CD4-positive, alpha-beta T cell (primary cell): ENCODE measurements at regions of chr19 and their contacts with region 1.

Region 1: DNA sequence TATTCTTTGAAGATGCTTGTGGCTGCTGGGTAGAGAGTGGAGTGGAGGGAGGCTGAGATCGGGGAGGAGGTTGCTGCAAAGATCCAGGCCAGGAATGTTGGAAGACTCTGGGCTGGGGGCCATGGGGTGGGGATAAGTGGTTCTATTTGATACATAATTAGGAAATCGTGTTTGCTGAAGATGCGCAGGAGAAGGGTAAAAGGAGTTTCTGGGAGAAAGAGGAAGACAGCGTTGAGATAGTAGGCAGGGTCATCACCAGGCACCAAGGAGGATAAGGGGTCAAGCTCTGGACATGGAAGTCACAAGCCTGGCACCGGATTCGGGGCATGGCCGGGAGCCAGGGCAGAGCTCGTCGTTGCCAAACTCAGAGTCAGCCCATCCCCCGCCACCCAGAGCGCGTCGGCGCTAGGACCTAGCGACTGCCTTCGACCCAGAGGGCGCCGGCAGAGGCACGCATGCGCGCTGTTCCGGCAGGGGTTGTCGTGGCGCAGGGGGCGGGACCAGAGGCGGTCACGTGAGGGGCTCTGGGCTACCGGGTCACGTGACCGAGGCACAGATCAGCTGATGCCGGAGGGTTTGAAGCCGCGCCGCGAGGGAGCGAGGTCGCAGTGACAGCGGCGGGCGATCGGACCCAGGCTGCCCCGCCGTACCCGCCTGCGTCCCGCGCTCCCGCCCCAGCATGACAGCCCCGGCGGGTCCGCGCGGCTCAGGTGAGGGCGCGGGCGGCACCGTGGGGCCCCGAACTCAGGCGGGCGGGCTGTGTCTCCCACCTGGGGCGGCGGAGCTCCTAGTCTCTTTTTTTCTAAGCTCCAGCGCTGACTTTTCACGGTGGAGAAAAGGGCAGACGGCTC is at the start of gene MCOLN1:
- DNase-seq: peak; percentile 99 to 100 (median 100)
- ATAC-seq: peak; percentile 90
- H3K4me3 ChIP-seq: peak within 1 kb of the TSS; percentile 72
- H3K4me3 Mint-ChIP-seq: peak within 1 kb of the TSS; percentile 97
- H3K27ac ChIP-seq: no peak within 1 kb of the TSS
- H3K27ac Mint-ChIP-seq: peak within 1 kb of the TSS; percentile 74
- H3K4me1 ChIP-seq: peaks cover 19% of the 10 kb centered on the region
- H3K4me1 Mint-ChIP-seq: peaks cover 20% of the 10 kb centered on the region
- H3K27me3 ChIP-seq: peaks cover 0 to 4% of the 10 kb centered on the region in 2 experiments
- H3K27me3 Mint-ChIP-seq: peaks cover 5% of the 10 kb centered on the region
- CTCF ChIP-seq: no peak
- total RNA-seq, gene MCOLN1: 7.9 to 8.8 TPM

Region 2: GRCh38 chr19:7442423-7442822 is 79.9 kb before region 1 on chr19:
- CTCF ChIA-PET with region 1: no interaction called
- POLR2A ChIA-PET with region 1: no interaction called
- intact Hi-C with region 1: no loop called
- DNase-seq: no peak
- ATAC-seq: no peak
- H3K4me3 ChIP-seq: no peak overlapping the region
- H3K4me3 Mint-ChIP-seq: no peak overlapping the region
- H3K27ac ChIP-seq: no peak overlapping the region
- H3K27ac Mint-ChIP-seq: no peak overlapping the region
- H3K4me1 ChIP-seq: no peaks in the 10 kb centered on the region
- H3K4me1 Mint-ChIP-seq: no peaks in the 10 kb centered on the region
- H3K27me3 ChIP-seq: no peaks in the 10 kb centered on the region
- H3K27me3 Mint-ChIP-seq: no peaks in the 10 kb centered on the region
- CTCF ChIP-seq: no peak

Region 3: GRCh38 chr19:7488736-7489353 is 33.5 kb before region 1 on chr19 and contains the start of gene PEX11G:
- CTCF ChIA-PET with region 1: no interaction called
- POLR2A ChIA-PET with region 1: no interaction called
- intact Hi-C with region 1: loop called in 1 of 2 experiments (anchors 2 kb)
- DNase-seq: peak; percentile 81 to 96 (median 89)
- ATAC-seq: peak; percentile 97
- H3K4me3 ChIP-seq: peak within 1 kb of the TSS; percentile 80
- H3K4me3 Mint-ChIP-seq: peak within 1 kb of the TSS; percentile 94
- H3K27ac ChIP-seq: peak within 1 kb of the TSS; percentile 41 to 60
- H3K27ac Mint-ChIP-seq: peak within 1 kb of the TSS; percentile 81
- H3K4me1 ChIP-seq: peaks cover 15% of the 10 kb centered on the region
- H3K4me1 Mint-ChIP-seq: peaks cover 7% of the 10 kb centered on the region
- H3K27me3 ChIP-seq: no peaks in the 10 kb centered on the region
- H3K27me3 Mint-ChIP-seq: no peaks in the 10 kb centered on the region
- CTCF ChIP-seq: no peak
- total RNA-seq, gene PEX11G: not detected

Region 4: GRCh38 chr19:7629347-7630054 is 107.2 kb after region 1 on chr19 and contains the starts of genes PET100 and XAB2:
- CTCF ChIA-PET with region 1: no interaction called
- POLR2A ChIA-PET with region 1: interaction called, 13 read pairs
- intact Hi-C with region 1: no loop called
- DNase-seq: peak; percentile 88 to 99 (median 94)
- ATAC-seq: peak; percentile 97
- H3K4me3 ChIP-seq: peak within 1 kb of the TSS; percentile 72
- H3K4me3 Mint-ChIP-seq: peak within 1 kb of the TSS; percentile 95
- H3K27ac ChIP-seq: peak within 1 kb of the TSS; percentile 92 to 94
- H3K27ac Mint-ChIP-seq: peak within 1 kb of the TSS; percentile 96
- H3K4me1 ChIP-seq: peaks cover 44% of the 10 kb centered on the region
- H3K4me1 Mint-ChIP-seq: peaks cover 34% of the 10 kb centered on the region
- H3K27me3 ChIP-seq: no peaks in the 10 kb centered on the region
- H3K27me3 Mint-ChIP-seq: no peaks in the 10 kb centered on the region
- CTCF ChIP-seq: no peak
- total RNA-seq, gene PET100: 178 to 188 TPM
- total RNA-seq, gene XAB2: 118 to 121 TPM

Region 5: DNA sequence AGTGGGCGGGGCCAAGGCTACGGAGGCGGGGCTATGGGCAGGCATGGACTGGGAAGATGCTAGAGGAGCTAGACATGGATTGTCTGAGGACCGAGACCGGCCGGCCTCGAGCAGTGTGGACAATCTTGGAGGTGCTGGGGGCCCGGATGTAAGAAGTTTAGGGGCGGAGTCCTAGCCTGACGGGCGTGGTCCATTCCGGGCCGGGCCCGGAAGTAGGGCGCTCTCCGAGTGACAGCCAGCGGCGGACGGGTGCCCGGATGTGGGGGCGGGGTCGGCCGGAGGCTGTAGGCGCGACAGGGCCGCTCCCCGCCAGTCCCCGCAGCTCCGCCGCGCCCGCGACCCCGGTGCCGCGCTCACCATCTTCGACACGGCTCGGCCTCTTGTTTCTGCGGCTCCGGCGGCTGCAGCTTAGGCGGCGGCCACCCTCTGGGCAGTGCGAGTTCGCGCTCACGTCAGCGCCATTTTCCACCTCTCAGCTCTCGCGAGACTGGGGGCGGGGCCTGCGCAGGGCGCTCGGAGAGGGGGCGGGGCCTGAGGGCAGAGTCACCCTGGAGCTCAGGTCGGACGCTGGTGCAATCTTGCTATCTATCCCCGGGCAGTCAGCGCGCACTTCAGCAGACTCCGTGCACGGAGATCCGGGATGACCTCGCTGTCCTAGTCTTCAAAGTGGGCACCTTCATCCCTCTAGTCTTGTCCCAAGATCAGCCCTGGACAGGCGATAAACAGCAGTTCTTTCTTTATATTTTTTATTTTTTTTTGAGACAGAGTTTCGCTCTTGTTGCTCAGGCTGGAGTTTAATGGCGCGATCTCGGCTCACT is 991.6 kb after region 1 on chr19 and contains the start of gene ZNF414:
- CTCF ChIA-PET with region 1: no interaction called
- POLR2A ChIA-PET with region 1: no interaction called
- intact Hi-C with region 1: no loop called
- DNase-seq: peak; percentile 91 to 99 (median 97)
- ATAC-seq: peak; percentile 68
- H3K4me3 ChIP-seq: peak within 1 kb of the TSS; percentile 51
- H3K4me3 Mint-ChIP-seq: peak within 1 kb of the TSS; percentile 91
- H3K27ac ChIP-seq: peak within 1 kb of the TSS; percentile 84 to 97
- H3K27ac Mint-ChIP-seq: peak within 1 kb of the TSS; percentile 100
- H3K4me1 ChIP-seq: peaks cover 68% of the 10 kb centered on the region
- H3K4me1 Mint-ChIP-seq: peaks cover 61% of the 10 kb centered on the region
- H3K27me3 ChIP-seq: no peaks in the 10 kb centered on the region
- H3K27me3 Mint-ChIP-seq: no peaks in the 10 kb centered on the region
- CTCF ChIP-seq: no peak
- total RNA-seq, gene ZNF414: 36.3 to 38.0 TPM